Prostate gland (tissue), 2 donors: ENCODE measurements at regions of chr21 and their contacts with region 1.

Region 1: GRCh38 chr21:40143822-40144525 is 276.7 kb downstream of the PCP4 start:
- DNase-seq: peak; percentile 53
- H3K4me3 ChIP-seq: no peak overlapping the region
- H3K27ac ChIP-seq: no peak overlapping the region
- H3K4me1 ChIP-seq: no peaks in the 10 kb centered on the region
- H3K27me3 ChIP-seq: no peaks in the 10 kb centered on the region
- CTCF ChIP-seq: peak; percentile 66 to 87 (median 80)
- POLR2A ChIP-seq: no peak

Region 2: DNA sequence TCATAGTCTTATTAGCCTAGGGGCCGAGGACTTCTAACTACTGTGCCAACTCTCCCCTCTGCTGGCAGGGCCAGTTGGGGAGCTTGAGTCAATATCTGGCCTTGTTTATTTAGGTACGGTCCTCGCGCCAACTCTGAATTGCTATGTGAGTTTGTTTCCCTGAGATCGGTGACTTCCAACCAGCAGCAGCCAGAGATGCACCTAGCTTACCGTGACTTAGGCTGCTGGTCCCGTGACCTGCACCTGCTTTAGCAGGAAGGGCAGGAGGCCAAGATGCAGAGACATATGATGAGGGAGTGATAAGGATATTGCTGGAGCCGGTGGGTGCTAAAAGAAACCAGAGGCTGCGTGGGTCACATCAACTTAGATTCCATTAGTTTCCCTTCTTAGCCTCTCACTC is 174.5 kb after region 1 on chr21:
- intact Hi-C with region 1: no loop called
- DNase-seq: no peak
- H3K4me3 ChIP-seq: no peak overlapping the region
- H3K27ac ChIP-seq: no peak overlapping the region
- H3K4me1 ChIP-seq: no peaks in the 10 kb centered on the region
- H3K27me3 ChIP-seq: no peaks in the 10 kb centered on the region
- CTCF ChIP-seq: no peak
- POLR2A ChIP-seq: no peak

Region 3: DNA sequence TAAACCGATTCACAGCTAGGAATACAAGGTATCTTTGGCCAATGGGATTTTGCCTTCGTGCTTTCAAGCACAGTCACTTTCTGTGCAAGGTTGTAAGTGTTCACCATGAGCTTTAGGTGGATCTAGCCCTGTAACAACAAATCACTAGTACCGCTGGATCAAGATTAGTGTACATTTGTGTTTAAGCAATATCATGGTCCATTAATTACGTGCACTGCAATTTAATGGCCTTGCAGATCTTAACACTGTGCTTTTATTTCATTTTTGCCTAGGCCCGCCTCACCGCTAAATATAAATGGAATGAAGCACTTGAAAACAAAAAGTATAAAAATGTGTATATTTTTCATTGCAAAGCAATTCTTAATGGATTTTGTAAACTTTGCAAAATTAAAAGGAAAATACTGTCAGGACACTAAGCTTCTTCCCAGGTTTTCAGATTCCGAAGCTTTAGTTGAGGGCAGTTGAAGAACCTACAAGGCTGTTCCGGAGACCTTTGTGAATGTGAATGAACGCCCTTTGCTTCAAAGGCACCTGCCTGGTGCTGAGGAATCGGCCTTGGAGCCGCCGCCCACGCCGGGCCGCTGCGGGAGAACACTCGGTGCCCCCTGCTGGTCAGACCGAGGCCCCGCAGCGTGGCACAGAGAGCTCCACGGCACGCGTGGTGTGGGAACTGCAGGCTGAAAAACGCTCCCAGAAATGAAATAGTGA is 242.1 kb after region 1 on chr21:
- intact Hi-C with region 1: loop called (anchors 10 kb)
- DNase-seq: peak; percentile 56
- H3K4me3 ChIP-seq: no peak overlapping the region
- H3K27ac ChIP-seq: no peak overlapping the region
- H3K4me1 ChIP-seq: no peaks in the 10 kb centered on the region
- H3K27me3 ChIP-seq: no peaks in the 10 kb centered on the region
- CTCF ChIP-seq: peak; percentile 70 to 88 (median 82)
- POLR2A ChIP-seq: no peak

Region 4: DNA sequence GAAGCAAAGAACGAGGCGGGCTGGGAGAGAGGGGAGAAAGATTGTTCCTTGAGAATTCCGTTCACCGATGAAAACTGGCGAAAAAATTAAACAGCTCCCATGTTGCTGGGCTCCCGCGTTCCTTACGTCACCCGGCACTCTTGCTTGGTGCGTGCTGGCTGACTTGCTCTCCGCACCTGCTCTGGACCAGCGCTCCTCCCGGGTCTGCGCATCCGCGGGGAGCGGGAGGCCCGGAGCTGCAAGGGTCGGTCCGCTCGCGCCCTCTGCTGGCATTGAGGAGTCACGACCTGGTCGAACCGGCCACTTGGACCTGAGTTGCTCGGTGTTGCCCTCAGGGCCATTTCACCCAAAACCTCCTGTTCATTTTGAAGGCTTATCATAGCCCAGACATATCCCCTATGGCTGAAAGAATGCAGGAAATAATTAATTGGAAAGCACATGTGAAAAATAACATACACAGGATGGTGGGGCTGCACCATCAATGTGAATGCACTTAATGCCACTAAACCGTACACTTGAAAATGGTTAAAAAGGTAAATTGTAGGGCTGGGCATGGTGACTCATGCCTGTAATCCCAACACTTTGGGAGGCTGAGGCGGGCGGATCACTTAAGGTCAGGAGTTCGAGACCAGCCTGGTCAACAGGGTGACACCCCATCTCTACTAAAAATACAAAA is 925.1 kb after region 1 on chr21:
- intact Hi-C with region 1: loop called (anchors 5 kb)
- DNase-seq: peak; percentile 77
- H3K4me3 ChIP-seq: no peak overlapping the region
- H3K27ac ChIP-seq: no peak overlapping the region
- H3K4me1 ChIP-seq: no peaks in the 10 kb centered on the region
- H3K27me3 ChIP-seq: no peaks in the 10 kb centered on the region
- CTCF ChIP-seq: peak; percentile 75 to 81 (median 80)
- POLR2A ChIP-seq: no peak